Activated T-helper 1 cell treated with anti-CD3 and anti-CD28 coated beads, Interleukin-12 subunit alpha, Interleukin-12 subunit beta, Interleukin-2, Interleukin-4 antibody, amounts not matched to agents 30 ng/mL and 10 ng/mL and 1 ng/mL, durations not matched to agents 14 hours and 24 hours and 36 hours (primary cell): ENCODE measurements at regions of chr1 and their contacts with region 1.

Region 1: GRCh38 chr1:230243583-230244353 is 176.7 kb downstream of the GALNT2 start:
- DNase-seq: no peak
- H3K4me3 Mint-ChIP-seq: no peak overlapping the region
- H3K27ac Mint-ChIP-seq: no peak overlapping the region
- H3K4me1 Mint-ChIP-seq: peaks cover 47% of the 10 kb centered on the region
- H3K27me3 Mint-ChIP-seq: no peaks in the 10 kb centered on the region

Region 2: GRCh38 chr1:229558571-229559335 is 685.0 kb before region 1 on chr1 and contains the start of gene ABCB10:
- intact Hi-C with region 1: loop called (anchors 5 kb)
- DNase-seq: peak; percentile 81
- H3K4me3 Mint-ChIP-seq: peak within 1 kb of the TSS; percentile 90
- H3K27ac Mint-ChIP-seq: peak within 1 kb of the TSS; percentile 83
- H3K4me1 Mint-ChIP-seq: peaks cover 49% of the 10 kb centered on the region
- H3K27me3 Mint-ChIP-seq: no peaks in the 10 kb centered on the region
- total RNA-seq, gene ABCB10: 46.2 and 47.0 TPM in 2 replicates

Region 3: GRCh38 chr1:230002164-230002803 is 241.5 kb before region 1 on chr1:
- intact Hi-C with region 1: no loop called
- DNase-seq: no peak
- H3K4me3 Mint-ChIP-seq: no peak overlapping the region
- H3K27ac Mint-ChIP-seq: no peak overlapping the region
- H3K4me1 Mint-ChIP-seq: no peaks in the 10 kb centered on the region
- H3K27me3 Mint-ChIP-seq: peaks cover 11% of the 10 kb centered on the region

Region 4: GRCh38 chr1:230109895-230110667 is 133.7 kb before region 1 on chr1:
- intact Hi-C with region 1: loop called (anchors 1 kb)
- DNase-seq: peak; percentile 57
- H3K4me3 Mint-ChIP-seq: peak overlapping the region; percentile 53
- H3K27ac Mint-ChIP-seq: peak overlapping the region; percentile 89
- H3K4me1 Mint-ChIP-seq: peaks cover 82% of the 10 kb centered on the region
- H3K27me3 Mint-ChIP-seq: no peaks in the 10 kb centered on the region

Region 5: DNA sequence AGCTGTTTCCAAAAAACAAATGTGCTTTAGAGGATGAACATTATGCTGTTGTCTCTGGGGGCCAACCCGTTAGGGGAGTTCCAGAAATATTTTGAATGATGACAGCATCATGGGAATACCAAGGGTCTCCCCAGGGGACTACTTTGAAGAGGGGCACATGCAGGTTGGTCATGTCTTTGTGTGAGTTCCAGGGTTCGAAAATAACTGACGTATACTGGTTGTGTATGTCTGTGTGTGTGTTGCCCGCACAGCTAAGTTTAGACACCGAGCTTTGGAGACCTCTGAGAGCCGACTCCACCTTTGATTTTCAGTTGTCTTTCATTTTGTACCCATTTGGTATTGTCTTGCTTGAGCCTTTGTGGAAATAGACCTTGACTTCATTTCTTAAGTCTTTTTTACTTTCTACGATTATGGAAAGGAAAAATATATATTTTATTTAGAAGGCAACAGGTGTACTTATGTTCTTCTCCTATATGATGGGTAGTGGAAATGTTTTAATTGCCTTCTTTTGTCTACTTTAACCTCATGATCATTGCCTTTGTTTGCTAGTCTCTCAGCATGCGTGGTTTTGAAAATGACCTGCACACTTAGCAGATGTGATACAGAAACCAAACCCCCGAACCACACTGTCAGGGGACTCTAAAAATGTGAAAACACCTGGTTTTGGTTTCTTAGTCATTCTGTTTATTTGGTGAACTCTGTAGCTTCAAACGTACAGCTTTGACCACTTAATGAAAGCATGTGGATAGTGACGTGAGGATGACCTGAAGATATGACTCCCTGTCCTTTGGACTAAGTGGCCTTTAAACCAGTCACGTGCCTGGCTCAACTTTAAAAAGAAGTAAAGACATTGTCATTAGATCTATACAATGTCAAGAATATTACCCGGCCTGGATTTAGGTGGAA is 120.2 kb before region 1 on chr1:
- intact Hi-C with region 1: loop called (anchors 1 kb)
- DNase-seq: peak; percentile 47
- H3K4me3 Mint-ChIP-seq: peak overlapping the region; percentile 45
- H3K27ac Mint-ChIP-seq: peak overlapping the region; percentile 73
- H3K4me1 Mint-ChIP-seq: peaks cover 68% of the 10 kb centered on the region
- H3K27me3 Mint-ChIP-seq: no peaks in the 10 kb centered on the region

Region 6: GRCh38 chr1:230186003-230186863 is 57.5 kb before region 1 on chr1:
- intact Hi-C with region 1: loop called (anchors 1 kb)
- DNase-seq: no peak
- H3K4me3 Mint-ChIP-seq: no peak overlapping the region
- H3K27ac Mint-ChIP-seq: peak overlapping the region; percentile 74
- H3K4me1 Mint-ChIP-seq: peaks cover 41% of the 10 kb centered on the region
- H3K27me3 Mint-ChIP-seq: no peaks in the 10 kb centered on the region

Region 7: DNA sequence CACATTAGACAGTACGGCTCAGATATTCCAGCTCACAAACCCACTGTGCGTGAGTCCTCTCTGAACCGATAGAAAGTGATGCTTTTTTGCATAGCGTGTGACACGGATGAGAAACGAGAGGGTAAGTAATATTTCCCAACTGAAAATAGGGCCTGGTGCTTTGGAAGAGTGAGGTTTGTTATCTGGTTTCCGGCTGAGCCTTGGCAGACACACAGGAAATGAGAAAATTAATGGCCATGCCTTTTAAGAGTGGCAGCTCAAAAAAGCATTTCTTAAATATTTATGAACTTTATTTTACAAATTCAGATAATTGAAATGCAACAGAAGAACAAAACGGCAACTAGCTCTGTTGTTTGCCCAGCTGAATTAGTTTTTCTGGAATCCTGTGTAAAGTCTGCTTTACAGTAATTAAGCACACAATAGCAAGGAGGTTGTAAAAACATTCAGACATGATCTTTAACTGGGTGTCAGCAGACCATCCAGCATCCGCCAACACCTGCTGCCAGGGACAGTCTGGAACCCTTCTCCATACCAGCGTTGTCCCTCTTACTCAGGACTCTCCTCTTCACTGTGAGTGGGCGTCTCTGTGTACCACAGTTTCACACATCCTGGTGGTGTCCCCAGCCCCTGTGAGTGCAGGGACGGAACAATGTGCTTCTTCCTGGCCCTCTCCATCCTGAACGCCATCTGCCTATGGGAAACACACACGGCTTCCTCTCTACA is 27.0 kb after region 1 on chr1:
- intact Hi-C with region 1: loop called (anchors 1 kb)
- DNase-seq: no peak
- H3K4me3 Mint-ChIP-seq: no peak overlapping the region
- H3K27ac Mint-ChIP-seq: peak overlapping the region; percentile 89
- H3K4me1 Mint-ChIP-seq: peaks cover 28% of the 10 kb centered on the region
- H3K27me3 Mint-ChIP-seq: no peaks in the 10 kb centered on the region

Region 8: DNA sequence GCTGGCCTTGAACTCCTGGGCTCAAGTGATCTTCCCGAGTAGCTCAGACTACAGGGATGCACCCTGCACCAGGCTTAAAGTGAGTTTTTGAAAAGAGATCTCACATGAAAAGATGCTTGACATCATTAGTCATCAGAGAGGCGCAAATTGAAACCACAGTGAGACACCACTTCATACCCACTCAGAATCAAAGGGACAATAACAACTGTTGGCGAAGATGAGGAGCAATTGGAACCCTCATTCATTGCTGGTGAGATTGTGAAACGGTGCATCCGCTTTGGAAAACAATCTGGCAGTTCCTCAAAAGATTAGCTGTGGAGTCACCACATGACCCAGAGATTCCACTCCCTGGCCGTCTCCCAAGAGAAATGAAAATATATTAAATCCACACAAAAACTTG is 60.1 kb after region 1 on chr1:
- intact Hi-C with region 1: loop called (anchors 1 kb)
- DNase-seq: no peak
- H3K4me3 Mint-ChIP-seq: peak overlapping the region; percentile 1
- H3K27ac Mint-ChIP-seq: no peak overlapping the region
- H3K4me1 Mint-ChIP-seq: peaks cover 12% of the 10 kb centered on the region
- H3K27me3 Mint-ChIP-seq: peaks cover 3% of the 10 kb centered on the region